GM10248 (cell line): ENCODE measurements at regions of chr12 and their contacts with region 1.

Region 1: GRCh38 chr12:57462251-57462911 is 2.8 kb downstream of the GLI1 start:
- DNase-seq: peak; percentile 94
- CTCF ChIP-seq: peak; percentile 91

Region 2: DNA sequence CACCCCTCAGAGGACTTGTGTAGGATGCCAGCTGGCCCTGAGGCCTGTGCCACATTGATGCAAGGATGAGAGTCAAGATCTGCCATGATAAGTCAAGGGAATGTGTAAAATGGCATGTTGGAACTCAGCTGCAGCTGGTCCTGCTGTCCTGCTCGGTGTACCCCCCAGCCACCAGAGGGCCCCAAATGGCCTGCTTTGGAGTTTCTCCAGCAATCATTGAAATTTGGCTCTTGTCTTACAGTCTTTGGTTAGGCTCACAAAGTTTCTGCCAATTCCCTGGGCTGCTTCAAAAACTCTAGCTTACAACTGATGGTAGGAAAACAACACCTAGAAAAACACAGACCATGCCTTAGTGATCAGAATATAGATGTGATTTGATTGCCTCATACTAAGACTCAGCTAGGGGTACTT is 622.5 kb before region 1 on chr12:
- CTCF ChIA-PET with region 1: no interaction called
- POLR2A ChIA-PET with region 1: no interaction called
- DNase-seq: peak; percentile 41
- CTCF ChIP-seq: peak; percentile 70

Region 3: DNA sequence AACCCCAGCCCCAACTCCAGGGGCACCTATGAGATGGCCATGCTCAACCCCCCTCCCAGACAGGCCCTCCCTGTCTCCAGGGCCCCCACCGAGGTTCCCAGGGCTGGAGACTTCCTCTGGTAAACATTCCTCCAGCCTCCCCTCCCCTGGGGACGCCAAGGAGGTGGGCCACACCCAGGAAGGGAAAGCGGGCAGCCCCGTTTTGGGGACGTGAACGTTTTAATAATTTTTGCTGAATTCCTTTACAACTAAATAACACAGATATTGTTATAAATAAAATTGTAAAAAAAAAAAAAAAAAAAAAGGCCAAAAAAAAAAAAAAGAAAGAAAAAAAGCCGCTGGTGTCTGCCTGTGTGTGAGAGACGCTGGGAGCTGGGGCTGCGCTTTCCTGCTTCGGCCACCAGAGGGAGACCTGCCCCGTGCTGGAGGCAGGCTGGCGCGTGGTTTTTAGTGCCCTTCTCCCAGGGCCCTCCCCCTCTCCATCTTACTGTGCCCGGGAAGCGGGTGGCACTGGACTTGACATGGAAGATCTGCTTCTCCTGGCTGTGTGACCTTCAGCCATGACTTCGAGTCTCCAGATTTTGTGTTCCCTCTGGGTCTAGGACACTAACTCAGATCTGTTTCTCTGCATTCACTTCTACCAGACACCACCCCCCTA is 249.2 kb before region 1 on chr12:
- CTCF ChIA-PET with region 1: interaction called, 12 read pairs
- POLR2A ChIA-PET with region 1: no interaction called
- DNase-seq: peak; percentile 89
- CTCF ChIP-seq: peak; percentile 97

Region 4: GRCh38 chr12:57272337-57273151 is 189.8 kb before region 1 on chr12:
- CTCF ChIA-PET with region 1: interaction called, 200 read pairs
- POLR2A ChIA-PET with region 1: no interaction called
- DNase-seq: no peak
- CTCF ChIP-seq: no peak

Region 5: GRCh38 chr12:57342207-57342691 is 120.1 kb before region 1 on chr12:
- CTCF ChIA-PET with region 1: interaction called, 16 read pairs
- POLR2A ChIA-PET with region 1: no interaction called
- DNase-seq: no peak
- CTCF ChIP-seq: no peak

Region 6: DNA sequence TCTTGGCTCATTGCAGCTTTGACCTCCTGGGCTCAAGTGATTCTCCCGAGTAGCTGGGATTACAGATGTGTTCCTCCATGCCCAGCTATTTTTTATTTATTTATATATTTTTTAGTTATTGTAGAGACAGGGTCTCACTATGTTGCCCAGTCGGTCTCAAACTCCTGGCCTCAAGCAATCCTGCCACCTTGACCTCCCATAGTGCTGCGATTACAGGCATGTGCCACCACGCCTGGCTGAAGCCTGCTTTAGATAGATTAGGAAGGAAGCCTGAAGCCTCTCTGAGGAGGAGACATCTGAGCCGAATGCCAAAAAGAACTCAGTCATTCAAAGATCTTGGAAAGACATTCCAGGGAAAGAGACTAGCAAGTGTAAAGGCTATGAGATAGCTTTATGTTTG is 17.6 kb before region 1 on chr12:
- CTCF ChIA-PET with region 1: interaction called, 18 read pairs
- POLR2A ChIA-PET with region 1: no interaction called
- DNase-seq: no peak
- CTCF ChIP-seq: no peak

Region 7: DNA sequence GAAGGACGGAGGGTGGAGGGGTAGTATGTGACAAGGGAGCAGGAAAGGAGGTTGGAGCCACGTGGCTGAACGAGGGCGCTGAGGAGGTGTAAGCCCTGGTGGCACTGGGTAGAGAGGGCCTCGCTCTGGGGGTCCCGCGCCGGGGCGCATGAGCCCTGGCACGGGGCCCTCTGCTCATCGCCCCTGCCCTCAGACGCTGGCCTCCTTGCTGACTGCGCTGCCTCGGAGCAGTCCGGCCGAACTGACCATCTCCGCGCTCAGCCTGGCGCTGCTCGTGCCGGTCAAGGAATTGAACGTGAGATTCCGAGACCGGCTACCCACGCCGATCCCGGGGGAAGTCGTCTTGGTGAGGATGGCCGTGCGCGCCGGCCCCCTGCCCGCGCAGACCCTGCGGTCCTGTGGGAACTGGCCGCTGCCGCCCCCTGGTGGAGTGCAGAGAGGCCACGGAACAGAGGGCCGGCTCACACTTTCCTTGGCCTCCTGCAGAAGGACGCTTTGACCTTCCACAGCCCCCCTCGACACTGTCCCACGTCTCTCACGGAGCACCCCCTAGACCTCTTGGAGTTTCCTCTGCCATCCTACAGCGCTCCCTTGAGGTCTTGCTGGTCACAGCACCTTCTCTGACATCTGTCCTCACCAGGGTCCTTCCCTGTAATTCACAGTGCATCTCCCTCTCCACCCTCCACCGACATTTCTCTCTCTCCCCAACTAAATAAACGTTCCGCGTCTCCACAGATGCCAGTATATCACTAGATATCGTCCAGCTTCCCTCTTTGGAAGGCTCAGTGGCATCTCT is 159.3 kb after region 1 on chr12:
- CTCF ChIA-PET with region 1: interaction called, 22 read pairs
- POLR2A ChIA-PET with region 1: no interaction called
- DNase-seq: peak; percentile 83
- CTCF ChIP-seq: peak; percentile 95